Activated CD4-positive, alpha-beta T cell treated with anti-CD3 and anti-CD28 coated beads for 36 hours (primary cell): ENCODE measurements at regions of chr3 and their contacts with region 1.

Region 1: GRCh38 chr3:156151824-156152428 is 31.5 kb downstream of the KCNAB1 start:
- DNase-seq: peak; percentile 77
- ATAC-seq: peak; percentile 78
- H3K4me3 Mint-ChIP-seq: no peak overlapping the region
- H3K27ac Mint-ChIP-seq: no peak overlapping the region
- H3K4me1 Mint-ChIP-seq: no peaks in the 10 kb centered on the region
- H3K27me3 Mint-ChIP-seq: no peaks in the 10 kb centered on the region

Region 2: GRCh38 chr3:155809181-155809580 is 342.7 kb before region 1 on chr3:
- CTCF ChIA-PET with region 1: no interaction called
- POLR2A ChIA-PET with region 1: no interaction called
- intact Hi-C with region 1: no loop called
- DNase-seq: no peak
- ATAC-seq: no peak
- H3K4me3 Mint-ChIP-seq: no peak overlapping the region
- H3K27ac Mint-ChIP-seq: no peak overlapping the region
- H3K4me1 Mint-ChIP-seq: peaks cover 10% of the 10 kb centered on the region
- H3K27me3 Mint-ChIP-seq: peaks cover 9% of the 10 kb centered on the region

Region 3: GRCh38 chr3:156382458-156383346 is 230.8 kb after region 1 on chr3:
- CTCF ChIA-PET with region 1: interaction called, 28 read pairs
- POLR2A ChIA-PET with region 1: no interaction called
- intact Hi-C with region 1: loop called (anchors 1 to 2 kb)
- DNase-seq: peak; percentile 43
- ATAC-seq: no peak
- H3K4me3 Mint-ChIP-seq: no peak overlapping the region
- H3K27ac Mint-ChIP-seq: no peak overlapping the region
- H3K4me1 Mint-ChIP-seq: no peaks in the 10 kb centered on the region
- H3K27me3 Mint-ChIP-seq: peaks cover 2% of the 10 kb centered on the region

Region 4: DNA sequence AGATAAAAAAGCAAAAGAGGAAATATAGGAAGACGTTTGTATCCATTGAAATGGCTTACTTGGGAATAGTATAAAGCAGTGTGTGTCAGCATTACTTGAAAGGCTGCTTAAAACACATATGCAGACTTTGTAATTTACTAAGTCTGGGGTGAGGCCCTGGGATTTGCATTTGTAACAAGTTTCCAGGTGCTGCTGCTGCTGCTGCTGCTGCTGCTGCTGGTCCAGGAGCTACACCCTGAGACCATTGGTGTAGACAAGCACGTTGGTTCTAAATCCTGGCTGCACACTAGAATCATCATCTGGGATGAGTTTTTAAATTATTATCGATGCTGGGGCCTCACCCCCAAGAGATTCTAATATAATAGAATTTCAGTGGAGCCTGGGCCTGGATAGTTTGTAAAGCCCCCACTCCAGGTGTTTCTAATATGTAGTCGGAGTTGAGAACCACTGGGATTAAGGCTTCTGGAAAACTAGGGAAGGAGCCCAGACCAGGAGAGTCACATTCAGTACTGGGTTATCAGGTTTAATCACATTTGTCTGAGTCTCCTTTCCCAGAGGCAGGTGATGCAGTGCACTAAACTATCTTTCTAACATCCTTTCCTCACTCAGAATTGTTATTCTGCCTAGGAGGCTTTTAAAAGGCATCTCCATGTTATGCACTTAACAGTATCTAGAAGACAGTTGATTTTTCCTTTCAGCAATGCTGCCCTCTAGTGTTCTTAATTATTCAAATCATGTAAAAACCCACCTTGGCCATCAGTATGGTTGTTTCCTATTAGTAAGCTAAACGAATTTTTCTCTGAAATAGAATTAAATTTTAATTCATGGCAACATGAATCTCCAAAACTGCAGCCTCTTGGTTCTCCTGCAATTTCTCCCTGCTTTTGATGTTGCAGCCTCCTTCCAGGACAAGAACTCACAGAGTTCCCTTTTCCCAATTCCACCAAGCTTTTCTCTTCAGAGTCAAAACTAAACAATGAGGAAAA is 357.6 kb after region 1 on chr3:
- CTCF ChIA-PET with region 1: interaction called, 88 read pairs
- POLR2A ChIA-PET with region 1: no interaction called
- intact Hi-C with region 1: loop called (anchors 1 kb)
- DNase-seq: no peak
- ATAC-seq: peak; percentile 58
- H3K4me3 Mint-ChIP-seq: no peak overlapping the region
- H3K27ac Mint-ChIP-seq: no peak overlapping the region
- H3K4me1 Mint-ChIP-seq: peaks cover 15% of the 10 kb centered on the region
- H3K27me3 Mint-ChIP-seq: peaks cover 13% of the 10 kb centered on the region

Region 5: DNA sequence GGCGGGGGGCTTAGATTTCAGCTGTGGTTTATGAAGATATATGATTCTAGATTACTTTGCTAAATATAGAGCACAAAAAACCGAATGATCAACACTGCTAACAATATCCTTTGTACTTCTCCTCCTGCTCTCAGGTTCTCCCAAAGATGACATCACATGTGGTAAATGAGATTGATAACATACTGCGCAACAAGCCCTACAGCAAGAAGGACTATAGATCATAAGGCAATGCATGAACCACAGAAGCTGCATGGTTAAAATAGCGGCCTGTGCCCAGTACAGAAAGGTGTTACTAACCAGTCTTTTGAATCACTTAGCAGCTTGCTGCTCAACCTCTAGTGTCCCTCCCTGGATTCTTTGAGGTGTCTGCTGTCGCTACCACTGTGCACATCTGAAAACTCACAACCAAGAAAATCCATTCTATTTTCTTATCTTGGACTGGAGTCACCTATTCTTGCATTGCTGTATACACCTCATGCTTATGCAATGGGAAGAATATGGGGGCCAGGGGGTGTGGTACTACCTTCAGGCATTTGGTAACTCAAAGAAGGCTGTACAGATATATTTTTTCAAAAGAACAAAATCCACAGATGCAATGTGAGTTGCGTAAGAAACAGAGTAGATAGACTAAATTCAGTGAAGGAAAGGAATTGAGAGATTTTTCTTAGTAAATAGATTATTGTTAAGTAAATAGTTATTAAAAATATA is 384.8 kb after region 1 on chr3:
- CTCF ChIA-PET with region 1: interaction called, 5 read pairs
- POLR2A ChIA-PET with region 1: no interaction called
- intact Hi-C with region 1: loop called (anchors 1 kb)
- DNase-seq: no peak
- ATAC-seq: no peak
- H3K4me3 Mint-ChIP-seq: no peak overlapping the region
- H3K27ac Mint-ChIP-seq: no peak overlapping the region
- H3K4me1 Mint-ChIP-seq: peaks cover 7% of the 10 kb centered on the region
- H3K27me3 Mint-ChIP-seq: no peaks in the 10 kb centered on the region

Region 6: GRCh38 chr3:156859578-156859977 is 707.7 kb after region 1 on chr3:
- CTCF ChIA-PET with region 1: no interaction called
- POLR2A ChIA-PET with region 1: no interaction called
- intact Hi-C with region 1: loop called in 1 of 2 experiments (anchors 10 kb)
- DNase-seq: no peak
- ATAC-seq: no peak
- H3K4me3 Mint-ChIP-seq: no peak overlapping the region
- H3K27ac Mint-ChIP-seq: no peak overlapping the region
- H3K4me1 Mint-ChIP-seq: no peaks in the 10 kb centered on the region
- H3K27me3 Mint-ChIP-seq: no peaks in the 10 kb centered on the region

Region 7: DNA sequence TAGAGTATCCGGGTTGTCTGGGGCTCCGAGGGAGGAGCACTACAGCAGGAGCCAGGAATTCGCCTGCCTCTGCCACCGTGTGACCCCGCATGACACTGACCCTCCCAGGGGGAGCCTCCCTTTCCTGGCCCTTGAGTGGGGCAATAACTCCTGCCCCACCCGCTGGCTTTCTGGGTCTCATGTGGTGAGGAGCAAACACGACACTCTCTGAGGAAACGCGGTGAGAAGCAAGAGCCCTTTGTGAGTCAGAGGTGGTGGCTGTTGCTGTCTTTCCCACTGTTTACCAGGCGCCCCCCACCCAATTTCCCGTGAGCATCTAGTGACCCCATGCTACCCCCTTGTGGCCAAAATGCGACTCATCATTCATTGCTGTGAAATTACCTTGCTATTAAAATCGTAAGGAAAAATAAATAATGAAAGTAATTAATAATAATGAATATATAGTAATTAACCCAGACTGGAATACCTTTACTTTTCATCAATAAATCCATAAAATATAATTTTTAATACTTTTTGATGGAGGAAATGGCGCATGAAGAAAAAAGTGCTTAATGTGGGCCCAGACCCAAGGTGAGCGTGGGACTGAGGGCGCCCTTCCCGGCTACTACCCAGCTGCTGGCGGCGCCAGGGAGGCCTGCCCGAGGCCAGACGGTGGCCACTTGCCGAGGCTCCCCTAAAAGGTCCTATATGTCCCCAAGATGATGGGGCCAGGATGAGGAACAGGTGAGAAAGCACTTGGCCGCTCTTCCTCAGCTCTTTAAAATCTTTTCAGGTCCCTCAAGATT is 978.7 kb after region 1 on chr3:
- CTCF ChIA-PET with region 1: no interaction called
- POLR2A ChIA-PET with region 1: no interaction called
- intact Hi-C with region 1: loop called in 1 of 2 experiments (anchors 2 kb)
- DNase-seq: peak; percentile 86
- ATAC-seq: peak; percentile 19
- H3K4me3 Mint-ChIP-seq: peak overlapping the region; percentile 57
- H3K27ac Mint-ChIP-seq: peak overlapping the region; percentile 95
- H3K4me1 Mint-ChIP-seq: peaks cover 76% of the 10 kb centered on the region
- H3K27me3 Mint-ChIP-seq: no peaks in the 10 kb centered on the region

Region 8: GRCh38 chr3:157239082-157239704 is 1087.3 kb after region 1 on chr3:
- CTCF ChIA-PET with region 1: no interaction called
- POLR2A ChIA-PET with region 1: no interaction called
- intact Hi-C with region 1: loop called in 1 of 2 experiments (anchors 5 kb)
- DNase-seq: peak; percentile 88
- ATAC-seq: peak; percentile 100
- H3K4me3 Mint-ChIP-seq: no peak overlapping the region
- H3K27ac Mint-ChIP-seq: no peak overlapping the region
- H3K4me1 Mint-ChIP-seq: peaks cover 3% of the 10 kb centered on the region
- H3K27me3 Mint-ChIP-seq: no peaks in the 10 kb centered on the region